Activated T-helper 1 cell treated with anti-CD3 and anti-CD28 coated beads, Interleukin-12 subunit alpha, Interleukin-12 subunit beta, Interleukin-2, Interleukin-4 antibody, amounts not matched to agents 30 ng/mL and 10 ng/mL and 1 ng/mL, durations not matched to agents 14 hours and 24 hours and 36 hours (primary cell): ENCODE measurements at regions of chr14 and their contacts with region 1.

Region 1: DNA sequence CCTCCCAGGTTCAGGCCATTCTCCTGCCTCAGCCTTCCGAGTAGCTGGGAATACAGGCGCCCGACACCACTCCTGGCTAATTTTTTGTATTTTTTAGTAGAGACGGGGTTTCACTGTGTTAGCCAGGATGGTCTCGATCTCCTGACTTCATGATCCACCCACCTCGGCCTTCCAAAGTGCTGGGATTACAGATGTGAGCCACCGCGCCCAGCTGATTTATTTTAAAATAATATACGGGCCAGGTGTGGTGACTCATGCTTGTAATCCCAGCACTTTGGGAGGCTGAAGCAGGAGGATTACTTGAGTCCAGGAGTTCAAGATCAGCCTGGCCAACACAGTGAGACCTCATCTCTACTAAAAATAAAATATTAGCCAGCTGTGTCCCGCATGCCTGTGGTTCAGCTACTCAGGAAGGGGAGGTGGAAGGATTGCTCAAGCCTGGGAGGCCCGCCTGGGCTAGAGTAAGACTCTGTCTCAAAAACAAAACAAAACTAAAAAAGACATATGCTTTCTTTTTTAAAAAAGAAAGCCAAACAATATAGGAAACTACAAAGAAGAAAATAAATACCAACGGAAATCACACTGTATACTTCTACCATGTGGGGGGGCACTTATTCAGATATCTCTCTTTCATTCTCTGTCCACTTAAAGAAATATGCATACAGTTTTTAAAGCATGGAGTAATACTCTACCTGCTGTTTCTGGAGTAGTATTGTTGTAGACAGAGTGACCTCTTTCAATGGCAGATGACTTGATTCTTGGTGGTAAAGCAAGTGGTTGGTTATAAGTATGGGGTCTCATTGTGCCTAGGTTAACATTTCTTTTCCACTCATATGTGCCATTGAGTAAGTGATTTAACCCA is 930 bp upstream of the MIA2 start:
- DNase-seq: no peak
- H3K4me3 Mint-ChIP-seq: no peak overlapping the region
- H3K27ac Mint-ChIP-seq: peak overlapping the region; percentile 70
- H3K4me1 Mint-ChIP-seq: peaks cover 46% of the 10 kb centered on the region
- H3K27me3 Mint-ChIP-seq: no peaks in the 10 kb centered on the region

Region 2: GRCh38 chr14:39102969-39103957 is 129.5 kb before region 1 on chr14 and contains the start of gene SEC23A:
- intact Hi-C with region 1: loop called (anchors 2 kb)
- DNase-seq: peak; percentile 83
- H3K4me3 Mint-ChIP-seq: peak within 1 kb of the TSS; percentile 98
- H3K27ac Mint-ChIP-seq: peak within 1 kb of the TSS; percentile 96
- H3K4me1 Mint-ChIP-seq: peaks cover 57% of the 10 kb centered on the region
- H3K27me3 Mint-ChIP-seq: no peaks in the 10 kb centered on the region
- total RNA-seq, gene SEC23A: 61.2 and 72.0 TPM in 2 replicates

Region 3: GRCh38 chr14:39174560-39175444 is 58.0 kb before region 1 on chr14 and contains the start of gene PNN:
- intact Hi-C with region 1: loop called (anchors 1 kb)
- DNase-seq: peak; percentile 97
- H3K4me3 Mint-ChIP-seq: peak within 1 kb of the TSS; percentile 94
- H3K27ac Mint-ChIP-seq: peak within 1 kb of the TSS; percentile 95
- H3K4me1 Mint-ChIP-seq: peaks cover 29% of the 10 kb centered on the region
- H3K27me3 Mint-ChIP-seq: no peaks in the 10 kb centered on the region
- total RNA-seq, gene PNN: 111 and 116 TPM in 2 replicates

Region 4: DNA sequence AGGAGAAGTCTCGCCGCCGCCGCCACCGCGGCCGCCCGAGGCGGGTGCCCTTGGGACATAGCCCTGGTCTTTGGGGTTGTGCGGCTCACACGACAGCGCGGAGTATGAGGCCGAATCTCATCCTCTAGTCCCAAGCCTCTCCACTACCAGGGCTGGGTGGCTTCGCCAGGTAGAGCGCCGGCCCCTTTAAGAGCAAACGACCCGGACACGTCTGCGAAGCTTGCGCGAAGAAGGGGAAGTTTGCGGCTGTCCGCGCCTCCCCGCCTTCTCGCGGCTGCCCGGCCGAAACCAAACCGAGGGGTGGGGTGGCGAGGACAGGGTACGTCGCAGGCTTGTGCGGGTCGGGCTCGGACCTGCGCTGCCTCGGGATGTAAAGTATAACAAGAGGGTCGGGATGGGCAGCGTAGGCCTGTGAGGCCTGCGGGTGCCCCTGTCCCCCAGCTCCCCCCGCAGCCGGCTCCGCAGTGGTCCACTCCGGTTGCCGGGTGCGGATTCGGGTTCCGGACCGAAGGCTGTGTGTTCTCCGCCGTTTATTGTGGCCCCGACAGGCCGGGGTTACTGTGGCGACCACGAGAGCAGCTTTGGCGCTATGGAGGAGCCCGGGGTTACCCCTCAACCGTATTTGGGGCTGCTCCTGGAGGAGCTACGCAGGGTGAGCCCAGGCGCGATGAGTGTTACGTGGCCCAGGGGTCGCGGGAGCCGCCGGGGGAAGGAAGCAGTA is 34.2 kb after region 1 on chr14:
- intact Hi-C with region 1: loop called (anchors 1 kb)
- DNase-seq: peak; percentile 76
- H3K4me3 Mint-ChIP-seq: peak overlapping the region; percentile 80
- H3K27ac Mint-ChIP-seq: peak overlapping the region; percentile 79
- H3K4me1 Mint-ChIP-seq: peaks cover 52% of the 10 kb centered on the region
- H3K27me3 Mint-ChIP-seq: no peaks in the 10 kb centered on the region

Region 5: DNA sequence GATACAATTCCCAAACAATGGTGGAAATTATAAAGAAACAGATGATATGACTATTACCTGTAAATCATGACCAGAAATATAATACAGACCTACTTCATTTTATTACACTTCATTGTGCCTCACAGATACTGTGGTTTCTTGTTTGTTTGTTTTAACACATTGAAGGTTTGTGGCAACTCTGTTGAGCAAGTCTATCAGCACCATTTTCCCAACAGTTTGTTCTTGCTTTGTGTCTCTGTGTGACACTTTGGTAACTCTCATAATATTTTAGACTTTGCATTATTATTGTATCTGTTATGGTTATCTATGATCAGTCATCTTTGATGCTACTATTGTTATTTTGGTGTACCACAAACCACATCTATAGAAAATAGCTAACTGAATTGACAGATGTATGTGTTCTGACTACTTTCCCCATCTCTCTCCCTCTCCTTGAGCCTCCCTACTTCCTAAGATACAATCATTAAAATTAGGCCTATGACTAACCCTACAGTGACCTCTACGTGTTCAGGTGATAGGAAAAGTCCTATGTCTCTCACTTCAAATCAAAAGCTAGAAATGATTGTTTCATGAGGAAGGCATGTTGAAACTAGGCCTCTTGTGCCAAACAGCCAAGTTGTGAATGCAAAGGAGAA is 150.4 kb after region 1 on chr14:
- intact Hi-C with region 1: loop called (anchors 2 kb)
- DNase-seq: no peak
- H3K4me3 Mint-ChIP-seq: no peak overlapping the region
- H3K27ac Mint-ChIP-seq: peak overlapping the region; percentile 3
- H3K4me1 Mint-ChIP-seq: peaks cover 16% of the 10 kb centered on the region
- H3K27me3 Mint-ChIP-seq: no peaks in the 10 kb centered on the region

Region 6: GRCh38 chr14:39446131-39446744 is 213.5 kb after region 1 on chr14:
- intact Hi-C with region 1: loop called (anchors 5 kb)
- DNase-seq: no peak
- H3K4me3 Mint-ChIP-seq: no peak overlapping the region
- H3K27ac Mint-ChIP-seq: peak overlapping the region; percentile 36
- H3K4me1 Mint-ChIP-seq: peaks cover 42% of the 10 kb centered on the region
- H3K27me3 Mint-ChIP-seq: no peaks in the 10 kb centered on the region